ENCODE measurements at regions of chr2 and their contacts with region 1.

Region 1: DNA sequence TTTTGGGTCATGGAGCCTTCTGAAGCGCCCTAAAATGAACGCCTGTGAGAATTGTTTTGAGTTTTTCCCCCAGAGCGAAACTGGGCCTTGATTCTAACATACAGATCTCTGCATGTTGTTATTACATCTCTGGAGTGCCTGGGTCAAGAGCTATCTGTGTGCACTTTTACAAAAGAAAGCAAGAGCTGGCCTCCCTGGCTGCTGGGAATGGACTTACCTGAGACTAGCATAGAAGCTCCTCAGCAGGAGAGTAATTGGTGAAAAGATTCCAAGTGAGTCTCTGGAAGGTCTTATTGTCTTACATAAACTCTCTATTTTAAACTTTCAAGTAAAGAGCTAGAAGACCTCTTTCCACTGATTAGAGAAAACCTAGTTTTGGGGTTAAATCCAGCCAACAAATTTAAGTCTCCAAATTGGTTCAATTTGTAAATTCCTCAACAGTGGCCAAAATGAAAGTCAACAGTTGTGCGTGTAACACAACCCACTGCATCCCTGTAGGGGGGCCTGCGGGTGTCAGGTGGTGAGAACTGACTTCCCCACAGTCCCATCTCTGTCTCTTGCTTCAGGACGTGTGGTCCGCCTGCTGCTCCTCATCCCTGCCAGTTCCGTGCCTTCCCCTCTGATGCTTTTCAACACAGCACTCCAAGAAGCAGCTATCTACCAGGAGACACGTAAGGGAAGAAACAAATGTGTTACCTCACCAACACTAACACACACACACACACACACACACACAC is 206.1 kb downstream of the SH3BP4 start:
- DNase-seq: no peak
- ATAC-seq: no peak
- H3K4me3 ChIP-seq: no peak overlapping the region
- H3K27ac ChIP-seq: no peak overlapping the region
- H3K4me1 ChIP-seq: no peaks in the 10 kb centered on the region
- H3K27me3 ChIP-seq: peaks cover 44% of the 10 kb centered on the region
- CTCF ChIP-seq: no peak
- POLR2A ChIP-seq: no peak
- RAD21 ChIP-seq: no peak

Region 2: GRCh38 chr2:234953116-234954031 is 204.5 kb before region 1 on chr2:
- CTCF ChIA-PET with region 1: no interaction called
- POLR2A ChIA-PET with region 1: no interaction called
- dilution Hi-C with region 1: no loop called
- in situ Hi-C with region 1: no loop called
- intact Hi-C with region 1: no loop called
- DNase-seq: no peak
- ATAC-seq: no peak
- H3K4me3 ChIP-seq: peak overlapping the region; percentile 56
- H3K27ac ChIP-seq: peak overlapping the region; percentile 96
- H3K4me1 ChIP-seq: peaks cover 41% of the 10 kb centered on the region
- H3K27me3 ChIP-seq: no peaks in the 10 kb centered on the region
- CTCF ChIP-seq: no peak
- POLR2A ChIP-seq: peak; percentile 44; the same call in 1 of the 2 replicates
- RAD21 ChIP-seq: no peak; the same call in 1 of the 2 replicates

Region 3: DNA sequence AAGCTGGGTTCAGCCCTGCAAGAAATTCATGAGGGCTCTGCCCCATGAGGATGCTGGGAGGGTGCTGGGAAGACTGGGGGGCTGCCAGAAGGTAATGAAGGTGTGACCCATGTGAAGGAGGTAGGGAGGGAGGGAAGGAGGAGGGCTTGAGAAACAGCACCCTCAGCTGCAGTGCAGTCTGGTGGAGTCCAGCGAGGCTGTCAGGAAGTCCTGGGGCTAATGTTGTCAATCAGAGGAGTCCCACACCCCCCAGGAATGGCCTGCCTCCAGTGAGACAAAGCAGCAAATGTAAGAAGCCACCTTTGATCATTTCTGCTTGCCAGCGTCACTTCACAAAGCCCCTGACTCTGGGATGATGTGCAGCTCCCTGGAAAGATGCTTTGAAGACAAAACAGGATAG is 42.3 kb after region 1 on chr2:
- CTCF ChIA-PET with region 1: no interaction called
- POLR2A ChIA-PET with region 1: no interaction called
- dilution Hi-C with region 1: no loop called
- in situ Hi-C with region 1: no loop called
- intact Hi-C with region 1: loop called (anchors 1 kb)
- DNase-seq: no peak
- ATAC-seq: no peak
- H3K4me3 ChIP-seq: no peak overlapping the region
- H3K27ac ChIP-seq: no peak overlapping the region
- H3K4me1 ChIP-seq: no peaks in the 10 kb centered on the region
- H3K27me3 ChIP-seq: peaks cover 52% of the 10 kb centered on the region
- CTCF ChIP-seq: no peak
- POLR2A ChIP-seq: no peak
- RAD21 ChIP-seq: no peak

Region 4: GRCh38 chr2:235500761-235501672 is 343.1 kb after region 1 on chr2:
- CTCF ChIA-PET with region 1: no interaction called
- POLR2A ChIA-PET with region 1: no interaction called
- dilution Hi-C with region 1: no loop called
- in situ Hi-C with region 1: no loop called
- intact Hi-C with region 1: no loop called
- DNase-seq: peak; percentile 71
- ATAC-seq: peak; percentile 85
- H3K4me3 ChIP-seq: no peak overlapping the region
- H3K27ac ChIP-seq: no peak overlapping the region
- H3K4me1 ChIP-seq: peaks cover 20% of the 10 kb centered on the region
- H3K27me3 ChIP-seq: no peaks in the 10 kb centered on the region
- CTCF ChIP-seq: no peak
- POLR2A ChIP-seq: no peak
- RAD21 ChIP-seq: no peak